ENCODE measurements at regions of chr7 and their contacts with region 1.

Region 1: GRCh38 chr7:100719523-100720319 is 547 bp upstream of the EPO start:
- DNase-seq: no peak
- H3K4me3 ChIP-seq: 0 out of 4 replicates have a peak overlapping the region, but pooled peaks of 1 of the 2 experiments have one; percentile 29
- H3K27ac ChIP-seq: no peak overlapping the region
- H3K4me1 ChIP-seq: peaks cover 0 to 3% of the 10 kb centered on the region in 2 experiments; a peak in 1 of 4 replicates
- H3K27me3 ChIP-seq: peaks cover 28% of the 10 kb centered on the region
- CTCF ChIP-seq: peak; percentile 47
- EP300 ChIP-seq: no peak
- RAD21 ChIP-seq: peak; percentile 56

Region 2: DNA sequence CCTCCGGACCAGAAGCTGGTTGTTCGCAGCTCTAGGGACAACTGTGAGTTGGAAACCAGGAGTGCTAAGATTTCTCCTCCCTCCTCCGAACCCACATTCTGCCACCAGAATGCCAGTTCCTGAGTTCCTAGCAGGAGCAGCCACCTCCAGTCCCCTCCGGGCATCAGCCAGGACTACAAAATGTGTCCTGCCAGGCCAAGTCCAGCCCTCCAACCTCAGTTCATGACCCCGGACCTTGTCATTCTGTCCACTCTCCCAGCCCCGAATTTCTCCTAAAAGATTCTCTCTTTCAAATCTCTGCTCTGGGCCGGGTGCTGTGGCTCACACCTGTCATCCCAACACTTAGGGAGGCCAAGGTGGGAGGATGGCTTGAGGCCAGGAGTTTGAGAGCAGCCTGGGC is 16.0 kb after region 1 on chr7:
- CTCF ChIA-PET with region 1: interaction called, 344 read pairs
- POLR2A ChIA-PET with region 1: no interaction called
- DNase-seq: no peak
- H3K4me3 ChIP-seq: no peak overlapping the region
- H3K27ac ChIP-seq: no peak overlapping the region
- H3K4me1 ChIP-seq: no peaks in the 10 kb centered on the region
- H3K27me3 ChIP-seq: peaks cover 15% of the 10 kb centered on the region; the same call in 1 of the 2 replicates
- CTCF ChIP-seq: no peak
- EP300 ChIP-seq: no peak
- RAD21 ChIP-seq: no peak

Region 3: DNA sequence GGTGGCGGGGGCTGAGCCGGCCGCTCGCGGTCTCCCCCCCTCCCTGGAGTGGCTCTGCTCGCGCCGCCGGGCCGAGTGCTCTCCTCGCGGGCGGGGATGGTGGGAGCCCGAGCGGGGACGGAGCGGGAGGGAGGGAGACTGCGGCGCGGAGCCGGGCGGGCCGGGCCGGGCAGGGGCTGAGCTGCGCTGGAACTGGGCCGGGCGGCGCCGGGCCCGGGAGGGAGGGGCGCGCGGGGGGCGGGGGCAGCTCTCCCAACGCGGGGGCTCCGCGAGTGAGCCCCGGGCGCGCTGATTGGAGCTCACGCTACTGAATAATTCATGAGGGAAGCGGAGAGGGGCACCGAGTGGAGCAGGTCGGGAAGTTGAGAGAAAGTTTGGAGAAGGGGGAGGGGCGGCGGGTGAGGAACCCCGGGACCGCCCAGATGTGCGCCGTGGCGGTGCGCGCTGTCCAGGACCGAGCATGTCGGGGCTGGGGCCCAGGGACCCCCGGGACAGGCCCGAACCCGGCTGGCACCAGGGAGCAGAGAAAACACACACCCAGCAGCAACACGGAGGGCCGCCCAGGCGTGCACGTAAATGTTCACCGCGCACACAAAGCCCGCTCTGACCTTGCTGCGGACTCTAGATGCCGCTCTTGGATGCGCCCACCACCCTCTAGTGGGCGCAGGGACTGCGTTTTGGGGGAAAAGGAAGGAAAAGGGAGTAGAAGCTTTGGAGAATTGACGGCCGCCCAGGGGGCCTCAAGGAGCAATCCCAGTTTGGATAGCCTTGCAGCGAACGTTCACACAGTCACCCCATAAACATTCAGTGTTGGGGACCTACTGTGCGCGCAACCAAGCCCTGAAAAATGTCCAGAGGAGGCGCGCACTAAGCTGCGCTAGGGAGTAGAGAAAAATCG is 107.9 kb after region 1 on chr7 and contains the start of gene EPHB4:
- CTCF ChIA-PET with region 1: interaction called, 29 read pairs
- POLR2A ChIA-PET with region 1: no interaction called
- DNase-seq: peak; percentile 88
- H3K4me3 ChIP-seq: peak within 1 kb of the TSS; percentile 65 to 78
- H3K27ac ChIP-seq: peak within 1 kb of the TSS; percentile 17 to 35
- H3K4me1 ChIP-seq: peaks cover 6 to 22% of the 10 kb centered on the region in 2 experiments; a peak in 2 of 4 replicates
- H3K27me3 ChIP-seq: no peaks in the 10 kb centered on the region
- CTCF ChIP-seq: peak; percentile 76
- EP300 ChIP-seq: no peak
- RAD21 ChIP-seq: peak; percentile 55
- polyA plus RNA-seq, gene EPHB4: 51.1 and 64.4 TPM in 2 replicates

Measured in SK-N-SH (cell line).